ENCODE measurements at regions of chr5 and their contacts with region 1.

Region 1: DNA sequence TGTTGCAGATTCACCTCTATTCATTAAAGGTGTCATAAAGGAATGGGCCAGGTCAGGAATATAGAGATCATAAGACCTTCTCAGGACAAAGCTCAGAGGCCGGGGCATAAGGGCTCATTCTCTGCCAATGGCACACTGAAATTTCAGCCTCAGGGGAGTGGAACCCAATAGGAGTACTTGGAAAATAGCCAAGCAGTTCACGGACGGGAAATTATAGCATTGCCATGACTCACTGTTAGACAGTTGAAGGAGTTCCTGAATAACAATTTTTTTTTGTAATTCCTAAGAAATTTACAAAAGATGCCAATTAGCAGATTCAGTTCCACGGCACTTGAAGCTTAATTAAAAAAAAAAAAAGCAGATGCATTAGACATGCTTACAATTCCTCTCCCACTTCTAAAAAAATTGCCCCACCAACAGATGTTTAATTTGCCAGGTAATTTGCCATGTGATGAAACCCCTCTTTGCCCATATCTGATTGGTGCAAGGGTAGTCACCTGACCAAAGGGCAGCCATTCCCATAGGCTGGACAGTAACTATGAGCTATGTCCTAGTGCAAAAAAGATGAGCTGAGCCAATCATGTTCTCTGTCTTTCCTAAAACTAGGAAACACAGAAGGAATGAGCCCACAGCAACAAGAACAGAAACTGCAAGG is 58.6 kb downstream of the PTCD2 start:
- DNase-seq: peak; percentile 98
- H3K4me3 Mint-ChIP-seq: peak overlapping the region; percentile 38
- H3K27ac Mint-ChIP-seq: peak overlapping the region; percentile 98
- H3K4me1 Mint-ChIP-seq: peaks cover 40% of the 10 kb centered on the region
- H3K27me3 Mint-ChIP-seq: no peaks in the 10 kb centered on the region
- CTCF ChIP-seq: no peak

Region 2: GRCh38 chr5:71719063-71719964 is 659.4 kb before region 1 on chr5 and contains the start of gene CARTPT:
- CTCF ChIA-PET with region 1: no interaction called
- POLR2A ChIA-PET with region 1: no interaction called
- intact Hi-C with region 1: no loop called
- DNase-seq: no peak
- H3K4me3 Mint-ChIP-seq: no peak within 1 kb of the TSS
- H3K27ac Mint-ChIP-seq: no peak within 1 kb of the TSS
- H3K4me1 Mint-ChIP-seq: no peaks in the 10 kb centered on the region
- H3K27me3 Mint-ChIP-seq: peaks cover 99% of the 10 kb centered on the region
- CTCF ChIP-seq: no peak
- total RNA-seq, gene CARTPT: not detected in 2 replicates

Region 3: GRCh38 chr5:72366324-72366976 is 12.3 kb before region 1 on chr5:
- CTCF ChIA-PET with region 1: interaction called, 15 read pairs
- POLR2A ChIA-PET with region 1: interaction called, 62 read pairs
- intact Hi-C with region 1: no loop called
- DNase-seq: peak; percentile 80
- H3K4me3 Mint-ChIP-seq: no peak overlapping the region
- H3K27ac Mint-ChIP-seq: no peak overlapping the region
- H3K4me1 Mint-ChIP-seq: peaks cover 39% of the 10 kb centered on the region
- H3K27me3 Mint-ChIP-seq: no peaks in the 10 kb centered on the region
- CTCF ChIP-seq: peak; percentile 73

Region 4: DNA sequence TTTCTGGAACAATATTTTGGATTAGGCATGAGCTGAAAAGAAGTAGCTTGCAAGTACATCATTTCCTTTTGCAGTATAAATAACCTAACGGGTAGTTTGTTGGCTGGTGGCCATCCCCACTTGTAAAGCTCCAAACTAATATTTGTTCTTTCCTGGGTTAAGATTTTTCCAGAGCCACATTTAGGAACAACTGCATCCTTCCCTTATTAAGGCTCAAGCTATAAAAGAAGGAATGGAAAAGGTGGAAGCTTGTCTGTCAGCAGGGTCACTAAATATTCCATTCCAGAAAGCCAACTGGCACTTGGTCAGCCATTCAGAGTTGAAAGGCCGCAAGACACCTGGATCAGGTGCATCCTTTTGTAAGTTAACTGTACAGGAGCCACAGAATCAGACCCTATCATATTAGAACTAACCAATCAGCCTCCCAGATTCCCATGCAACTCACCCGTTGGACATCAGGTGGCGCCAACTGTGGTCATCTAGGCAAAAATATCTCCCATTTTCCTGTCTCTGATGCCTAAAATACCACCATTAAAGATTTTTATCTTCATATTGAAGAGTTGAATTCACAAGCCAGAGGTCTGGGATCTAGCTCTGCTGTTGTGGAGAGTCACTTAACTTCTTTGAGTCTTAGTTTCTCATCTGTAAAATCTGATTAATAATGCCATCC is 24.3 kb after region 1 on chr5:
- CTCF ChIA-PET with region 1: interaction called, 5 read pairs
- POLR2A ChIA-PET with region 1: interaction called, 31 read pairs
- intact Hi-C with region 1: no loop called
- DNase-seq: no peak
- H3K4me3 Mint-ChIP-seq: no peak overlapping the region
- H3K27ac Mint-ChIP-seq: peak overlapping the region; percentile 82
- H3K4me1 Mint-ChIP-seq: peaks cover 13% of the 10 kb centered on the region
- H3K27me3 Mint-ChIP-seq: no peaks in the 10 kb centered on the region
- CTCF ChIP-seq: peak; percentile 24

Region 5: GRCh38 chr5:72451741-72452505 is 73.2 kb after region 1 on chr5:
- CTCF ChIA-PET with region 1: no interaction called
- POLR2A ChIA-PET with region 1: interaction called, 16 read pairs
- intact Hi-C with region 1: no loop called
- DNase-seq: peak; percentile 86
- H3K4me3 Mint-ChIP-seq: no peak overlapping the region
- H3K27ac Mint-ChIP-seq: peak overlapping the region; percentile 92
- H3K4me1 Mint-ChIP-seq: peaks cover 27% of the 10 kb centered on the region
- H3K27me3 Mint-ChIP-seq: no peaks in the 10 kb centered on the region
- CTCF ChIP-seq: no peak

Region 6: DNA sequence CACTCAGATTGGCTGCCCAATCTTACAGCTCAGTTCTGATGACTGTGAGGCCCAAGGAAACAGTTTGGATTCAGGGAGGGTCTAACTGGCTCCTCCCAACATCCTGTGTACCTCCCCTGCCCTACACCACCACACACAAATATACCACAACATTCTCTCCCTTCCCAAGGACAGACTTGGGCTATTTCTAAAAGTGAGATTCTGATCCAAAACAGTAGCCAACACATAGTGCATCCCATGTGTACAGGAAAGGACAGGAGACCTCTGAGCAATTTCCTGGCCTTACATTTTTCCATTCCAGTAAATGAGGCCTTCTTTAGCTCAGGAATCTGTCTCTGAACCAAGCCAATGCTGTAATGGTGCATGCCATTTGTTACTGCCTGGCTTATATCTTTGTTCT is 107.6 kb after region 1 on chr5:
- CTCF ChIA-PET with region 1: interaction called, 4 read pairs
- POLR2A ChIA-PET with region 1: interaction called, 18 read pairs
- intact Hi-C with region 1: no loop called
- DNase-seq: no peak
- H3K4me3 Mint-ChIP-seq: no peak overlapping the region
- H3K27ac Mint-ChIP-seq: peak overlapping the region; percentile 96
- H3K4me1 Mint-ChIP-seq: peaks cover 27% of the 10 kb centered on the region
- H3K27me3 Mint-ChIP-seq: no peaks in the 10 kb centered on the region
- CTCF ChIP-seq: no peak

Region 7: DNA sequence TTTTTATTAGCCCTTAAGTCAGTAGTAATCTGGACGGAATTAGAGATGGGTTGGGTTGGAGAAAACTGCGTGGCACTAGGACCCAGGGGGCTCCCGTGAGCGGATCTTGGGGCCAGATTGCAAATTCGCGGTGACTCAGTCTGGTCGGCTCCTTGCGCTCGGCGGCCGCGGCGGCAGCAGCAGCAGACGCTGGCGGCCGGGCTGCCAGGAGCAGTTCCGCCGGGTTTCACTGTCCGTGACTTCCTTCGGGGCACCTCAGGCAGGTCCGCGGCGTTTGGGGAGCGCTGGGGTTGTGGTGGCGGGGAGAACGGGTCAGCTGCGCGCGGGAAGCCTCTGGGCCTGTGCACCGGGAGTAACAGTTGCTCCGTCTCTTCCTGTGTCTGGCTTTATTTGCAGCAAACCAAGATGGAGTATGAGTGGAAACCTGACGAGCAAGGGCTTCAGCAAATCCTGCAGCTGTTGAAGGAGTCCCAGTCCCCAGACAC is 469.3 kb after region 1 on chr5:
- CTCF ChIA-PET with region 1: no interaction called
- POLR2A ChIA-PET with region 1: interaction called, 19 read pairs
- intact Hi-C with region 1: no loop called
- DNase-seq: peak; percentile 93
- H3K4me3 Mint-ChIP-seq: peak overlapping the region; percentile 98
- H3K27ac Mint-ChIP-seq: peak overlapping the region; percentile 91
- H3K4me1 Mint-ChIP-seq: peaks cover 43% of the 10 kb centered on the region
- H3K27me3 Mint-ChIP-seq: no peaks in the 10 kb centered on the region
- CTCF ChIP-seq: no peak

Measured in MCF 10A (cell line).